PC-9 (cell line): ENCODE measurements at regions of chrX and their contacts with region 1.

Region 1: DNA sequence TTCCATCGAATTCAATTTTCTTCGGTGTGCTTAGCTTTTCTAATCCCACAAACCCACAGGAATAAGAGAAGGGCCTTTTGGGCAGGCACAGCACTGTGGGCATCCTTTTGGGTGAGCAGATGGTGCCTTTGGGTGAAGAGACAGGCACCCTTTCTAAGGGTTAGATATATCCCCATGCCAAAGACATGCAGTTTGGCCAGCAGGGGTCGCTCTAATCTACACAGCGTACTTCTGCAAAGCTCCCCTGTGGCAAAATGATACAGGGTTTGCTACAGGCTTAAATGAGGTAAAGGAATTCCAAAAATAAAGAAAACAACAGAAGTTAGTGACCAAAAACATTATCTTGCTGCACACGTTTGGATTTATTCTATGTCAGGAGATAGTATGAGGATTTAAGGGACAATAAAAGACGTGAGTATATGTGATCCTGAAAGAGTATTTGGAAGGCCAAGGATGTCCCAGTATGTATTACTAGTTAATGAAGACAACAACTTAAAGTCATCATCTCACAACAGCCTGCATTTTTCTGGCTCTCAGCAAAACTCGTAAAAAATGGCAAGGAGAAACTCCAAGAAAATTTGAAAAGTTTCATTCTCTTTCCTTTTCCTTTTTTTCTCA is 49.5 kb downstream of the PHEX start:
- DNase-seq: peak in 1 of 2 experiments; percentile 13
- H3K4me3 ChIP-seq: no peak overlapping the region
- H3K27ac ChIP-seq: no peak overlapping the region
- H3K4me1 ChIP-seq: no peaks in the 10 kb centered on the region
- H3K27me3 ChIP-seq: no peaks in the 10 kb centered on the region
- CTCF ChIP-seq: peak; percentile 63

Region 2: DNA sequence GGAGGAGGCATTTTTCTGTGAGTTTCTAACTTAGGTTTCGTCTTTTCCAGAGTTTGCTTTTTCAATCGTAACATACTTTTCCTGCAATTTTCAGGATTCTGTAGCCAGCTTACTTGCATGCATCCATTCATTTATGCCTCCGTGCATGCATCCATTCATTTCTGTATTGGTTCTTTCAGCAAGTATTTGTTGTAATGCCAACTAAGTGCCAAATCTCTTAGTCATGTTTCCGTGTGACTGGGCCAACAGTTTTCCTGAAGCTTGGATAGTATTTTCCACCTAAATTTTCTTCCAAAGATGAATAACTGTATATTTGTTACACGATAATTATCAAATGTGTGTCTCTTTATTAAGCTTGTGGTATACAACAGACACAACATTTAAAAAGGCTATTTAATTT is 232.6 kb after region 1 on chrX:
- CTCF ChIA-PET with region 1: interaction called, 11 read pairs
- POLR2A ChIA-PET with region 1: no interaction called
- intact Hi-C with region 1: no loop called
- DNase-seq: no peak
- H3K4me3 ChIP-seq: no peak overlapping the region
- H3K27ac ChIP-seq: no peak overlapping the region
- H3K4me1 ChIP-seq: no peaks in the 10 kb centered on the region
- H3K27me3 ChIP-seq: no peaks in the 10 kb centered on the region
- CTCF ChIP-seq: no peak

Region 3: GRCh38 chrX:22520128-22520828 is 438.7 kb after region 1 on chrX:
- CTCF ChIA-PET with region 1: no interaction called
- POLR2A ChIA-PET with region 1: no interaction called
- intact Hi-C with region 1: no loop called
- DNase-seq: peak; percentile 20 to 55
- H3K4me3 ChIP-seq: no peak overlapping the region
- H3K27ac ChIP-seq: peak overlapping the region; percentile 69
- H3K4me1 ChIP-seq: peaks cover 16% of the 10 kb centered on the region
- H3K27me3 ChIP-seq: no peaks in the 10 kb centered on the region
- CTCF ChIP-seq: no peak